Spleen (tissue), 13 donors: ENCODE measurements at regions of chr6 and their contacts with region 1.

Region 1: GRCh38 chr6:138115877-138116660 is 8.8 kb upstream of the PERP start:
- DNase-seq: peak; percentile 83
- H3K4me3 ChIP-seq: no peak overlapping the region
- H3K27ac ChIP-seq: no peak overlapping the region
- H3K4me1 ChIP-seq: peaks cover 0 to 10% (median 2%) of the 10 kb centered on the region in 6 donors
- H3K27me3 ChIP-seq: peaks cover 0 to 24% (median 0%) of the 10 kb centered on the region in 7 donors
- CTCF ChIP-seq: peak; percentile 40 to 82 (median 70)
- POLR2A ChIP-seq: no peak

Region 2: GRCh38 chr6:138227316-138227781 is 111.3 kb after region 1 on chr6:
- intact Hi-C with region 1: no loop called
- DNase-seq: no peak
- H3K4me3 ChIP-seq: no peak overlapping the region
- H3K27ac ChIP-seq: no peak overlapping the region
- H3K4me1 ChIP-seq: no peaks in the 10 kb centered on the region
- H3K27me3 ChIP-seq: peaks cover 0 to 3% (median 0%) of the 10 kb centered on the region in 7 donors
- CTCF ChIP-seq: no peak
- POLR2A ChIP-seq: no peak

Region 3: DNA sequence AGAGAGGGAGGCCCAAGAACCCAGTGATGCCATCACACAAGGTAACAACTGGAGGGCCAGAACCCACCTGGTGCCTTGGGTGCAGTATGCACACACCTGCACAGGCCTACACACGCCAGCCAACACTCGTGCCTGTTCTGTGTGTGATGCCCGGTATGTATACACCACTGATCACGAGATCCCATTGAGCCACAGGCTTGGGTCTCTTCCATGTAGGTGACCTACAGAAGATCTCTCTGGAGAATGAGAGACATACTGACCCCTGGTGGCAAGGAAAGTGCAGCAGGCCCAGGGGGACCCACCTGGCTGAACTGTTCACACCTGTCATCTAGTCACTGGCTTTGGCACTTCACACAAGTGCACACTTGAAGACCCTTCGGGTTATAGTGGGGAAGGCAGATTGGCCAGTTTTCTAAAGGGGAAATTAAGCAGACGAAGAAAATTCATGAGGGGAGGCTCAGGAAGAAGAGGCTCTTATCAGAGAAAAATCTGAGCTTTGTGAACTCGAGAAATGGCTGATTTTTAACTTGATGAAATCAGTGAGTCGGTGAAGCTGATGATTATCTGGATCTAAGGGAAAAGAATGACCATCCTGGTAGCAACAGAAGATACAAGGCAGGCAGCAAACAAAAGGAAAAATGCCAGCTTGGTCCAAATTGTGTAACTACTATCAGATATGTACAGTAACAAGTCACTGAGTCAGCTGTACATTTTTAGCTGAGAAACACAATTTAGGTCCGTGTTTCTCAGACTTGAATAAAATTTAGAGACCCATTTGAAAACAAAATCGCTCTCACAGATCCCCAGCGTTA is 171.3 kb after region 1 on chr6:
- intact Hi-C with region 1: loop called (anchors 10 kb)
- DNase-seq: peak; percentile 75
- H3K4me3 ChIP-seq: no peak overlapping the region
- H3K27ac ChIP-seq: no peak overlapping the region
- H3K4me1 ChIP-seq: no peaks in the 10 kb centered on the region
- H3K27me3 ChIP-seq: no peaks in the 10 kb centered on the region
- CTCF ChIP-seq: peak in 9 of 11 experiments; percentile 5 to 68 (median 61)
- POLR2A ChIP-seq: no peak

Region 4: DNA sequence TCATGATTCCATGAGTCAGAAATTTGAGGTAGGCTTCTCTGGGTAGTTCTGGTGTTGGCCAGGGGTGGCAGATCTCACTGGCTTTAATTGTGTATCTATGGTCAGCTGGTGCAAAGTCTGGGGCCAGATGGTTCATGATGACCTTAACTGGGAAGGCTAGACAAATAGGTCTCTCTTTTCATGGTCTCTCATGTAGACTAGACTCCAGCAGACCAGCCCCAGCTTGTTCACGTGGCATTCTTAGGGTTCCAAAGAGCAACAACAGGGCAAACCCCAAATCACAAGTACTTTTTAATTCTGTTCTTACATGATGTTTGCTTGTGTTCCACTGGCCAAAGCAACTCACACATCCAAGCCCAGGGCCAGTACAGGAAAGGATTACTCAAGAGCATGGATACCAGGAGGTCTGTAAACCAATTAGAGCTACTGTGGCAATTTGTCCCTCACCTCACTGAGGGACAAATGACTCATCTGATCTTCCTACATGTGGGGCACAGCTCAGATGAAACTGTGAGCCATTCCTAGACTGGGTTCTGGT is 181.8 kb after region 1 on chr6:
- intact Hi-C with region 1: no loop called
- DNase-seq: no peak
- H3K4me3 ChIP-seq: no peak overlapping the region
- H3K27ac ChIP-seq: no peak overlapping the region
- H3K4me1 ChIP-seq: no peaks in the 10 kb centered on the region
- H3K27me3 ChIP-seq: peaks cover 0 to 7% (median 0%) of the 10 kb centered on the region in 7 donors
- CTCF ChIP-seq: no peak
- POLR2A ChIP-seq: no peak

Region 5: DNA sequence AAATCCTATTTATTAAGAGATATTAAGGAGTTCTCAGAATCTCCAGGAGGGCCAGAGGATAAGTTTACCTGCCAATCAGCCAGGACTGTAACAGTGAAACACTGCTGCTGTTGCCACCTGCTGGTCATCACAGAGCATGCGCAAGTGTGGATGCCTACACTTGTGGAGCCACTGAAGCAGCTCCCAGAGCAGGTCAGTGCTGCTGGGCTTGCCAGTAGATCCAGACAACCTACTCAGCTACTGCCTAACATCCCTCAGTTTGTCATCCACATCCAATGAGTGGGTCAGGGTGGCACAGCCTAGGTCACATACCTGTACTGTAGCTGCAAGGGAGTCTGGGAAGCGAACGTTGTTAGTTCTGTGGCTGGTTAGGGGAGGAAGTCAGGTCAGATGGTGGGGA is 401.6 kb after region 1 on chr6:
- intact Hi-C with region 1: loop called (anchors 5 kb)
- DNase-seq: peak; percentile 84
- H3K4me3 ChIP-seq: no peak overlapping the region
- H3K27ac ChIP-seq: no peak overlapping the region
- H3K4me1 ChIP-seq: peaks cover 0 to 25% (median 6%) of the 10 kb centered on the region in 6 donors
- H3K27me3 ChIP-seq: no peaks in the 10 kb centered on the region
- CTCF ChIP-seq: peak; percentile 45 to 87 (median 67)
- POLR2A ChIP-seq: no peak